Activated B cell treated with CpG ODN at 0.5 μM for 24 hours (primary cell): ENCODE measurements at regions of chr17 and their contacts with region 1.

Region 1: DNA sequence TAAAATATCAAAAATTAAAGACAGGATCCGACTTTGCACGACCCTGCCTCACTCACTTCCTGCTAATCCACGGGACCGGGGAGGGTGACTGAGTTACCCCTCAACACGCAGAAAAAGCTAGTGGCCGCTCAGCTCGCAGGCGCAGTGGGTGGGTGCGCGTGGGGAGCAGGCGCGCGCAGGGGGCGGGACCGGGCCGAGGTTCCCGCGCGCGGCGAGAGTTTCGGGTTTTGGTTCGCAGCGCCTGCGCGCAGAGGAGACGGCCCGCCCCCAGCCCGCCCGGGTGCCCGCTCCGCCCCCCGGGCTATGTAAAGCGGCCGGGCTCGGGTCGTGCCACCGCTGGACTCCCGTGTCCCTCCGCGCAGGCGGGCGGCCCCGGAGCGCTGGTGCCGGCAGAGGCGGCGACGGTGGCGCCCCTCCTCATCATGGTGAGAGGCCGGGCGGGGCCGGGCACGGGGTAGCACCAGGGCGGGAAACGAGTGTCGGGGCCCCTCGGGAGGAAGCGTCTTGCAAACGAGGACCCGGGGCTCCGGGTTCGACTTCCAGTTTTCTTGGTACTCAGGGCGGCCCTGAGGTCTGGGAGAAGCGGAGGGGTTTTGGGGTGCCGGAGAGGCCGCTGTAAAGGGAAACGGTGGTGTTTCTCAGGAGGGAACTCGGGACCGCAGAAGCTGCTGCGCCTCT is at the start of gene CNP:
- DNase-seq: peak; percentile 92
- ATAC-seq: peak; percentile 85
- H3K4me3 Mint-ChIP-seq: peak within 1 kb of the TSS; percentile 82
- H3K27ac Mint-ChIP-seq: peak within 1 kb of the TSS; percentile 72
- H3K4me1 Mint-ChIP-seq: peaks cover 43% of the 10 kb centered on the region
- H3K27me3 Mint-ChIP-seq: no peaks in the 10 kb centered on the region
- CTCF ChIP-seq: no peak
- total RNA-seq, gene CNP: 47.2 and 48.0 TPM in 2 replicates

Region 2: DNA sequence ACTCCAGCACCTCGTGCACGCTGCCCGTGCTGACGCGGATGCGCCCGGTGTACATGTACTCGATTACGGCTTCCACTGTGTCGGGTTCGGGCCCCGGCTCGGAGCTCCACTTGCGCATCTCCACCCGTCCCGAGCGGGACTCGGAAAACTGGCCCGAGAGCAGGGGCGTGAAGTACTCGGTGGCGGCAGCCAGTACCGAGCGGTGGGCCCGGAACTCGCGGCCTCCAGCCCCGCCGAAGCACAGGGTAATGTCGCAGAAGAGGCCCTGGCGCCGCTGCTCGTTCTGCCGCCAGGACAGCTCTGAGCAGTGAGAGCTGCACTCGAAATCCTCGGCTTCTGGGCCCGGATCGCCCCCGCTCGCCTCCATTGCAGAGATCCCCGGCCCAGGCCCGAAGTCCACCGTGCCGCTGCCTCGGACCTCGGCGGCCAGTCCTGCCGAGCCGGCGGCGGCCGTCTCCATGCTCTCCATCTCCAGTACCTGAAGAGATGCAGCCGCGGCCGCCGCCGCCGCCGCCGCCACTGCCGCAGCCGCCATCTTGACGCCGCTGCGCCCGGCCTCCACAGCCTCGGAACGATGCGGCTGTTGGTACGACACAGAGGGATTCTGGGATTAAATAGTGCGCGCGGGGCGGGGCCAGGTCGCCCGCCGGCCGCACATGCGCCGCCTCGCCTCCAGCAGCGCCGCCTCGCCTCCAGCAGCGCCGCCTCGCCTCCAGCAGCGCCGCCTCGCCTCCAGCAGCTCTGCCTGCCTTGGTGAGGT is 101.6 kb before region 1 on chr17 and contains the start of gene KLHL11:
- CTCF ChIA-PET with region 1: no interaction called
- POLR2A ChIA-PET with region 1: interaction called, 6 read pairs
- intact Hi-C with region 1: loop called (anchors 1 kb)
- DNase-seq: peak; percentile 84
- ATAC-seq: peak; percentile 95
- H3K4me3 Mint-ChIP-seq: no peak within 1 kb of the TSS
- H3K27ac Mint-ChIP-seq: peak within 1 kb of the TSS; percentile 87
- H3K4me1 Mint-ChIP-seq: peaks cover 19% of the 10 kb centered on the region
- H3K27me3 Mint-ChIP-seq: no peaks in the 10 kb centered on the region
- CTCF ChIP-seq: no peak
- total RNA-seq, gene KLHL11: 13.6 and 17.3 TPM in 2 replicates

Region 3: DNA sequence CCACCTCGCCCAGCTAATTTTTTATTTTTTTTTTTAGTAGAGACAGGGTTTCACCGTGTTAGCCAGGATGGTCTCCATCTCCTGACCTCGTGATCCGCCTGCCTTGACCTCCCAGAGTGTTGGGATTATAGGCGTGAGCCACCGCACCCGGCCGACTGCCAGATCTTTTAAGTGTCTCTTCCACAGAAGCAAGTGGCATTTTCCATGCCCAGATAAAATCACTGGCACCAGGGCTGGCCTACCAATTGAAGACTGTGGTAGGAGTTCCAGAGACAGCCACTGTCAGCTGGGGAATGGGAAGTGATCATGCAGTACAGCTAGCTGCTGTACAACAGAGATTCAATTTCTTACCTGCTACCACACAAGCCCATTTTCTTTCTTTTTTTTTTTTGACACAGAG is 17.9 kb after region 1 on chr17:
- CTCF ChIA-PET with region 1: interaction called, 3 read pairs
- POLR2A ChIA-PET with region 1: interaction called, 8 read pairs
- intact Hi-C with region 1: loop called (anchors 2 kb)
- DNase-seq: no peak
- ATAC-seq: no peak
- H3K4me3 Mint-ChIP-seq: no peak overlapping the region
- H3K27ac Mint-ChIP-seq: no peak overlapping the region
- H3K4me1 Mint-ChIP-seq: peaks cover 18% of the 10 kb centered on the region
- H3K27me3 Mint-ChIP-seq: no peaks in the 10 kb centered on the region
- CTCF ChIP-seq: no peak

Region 4: DNA sequence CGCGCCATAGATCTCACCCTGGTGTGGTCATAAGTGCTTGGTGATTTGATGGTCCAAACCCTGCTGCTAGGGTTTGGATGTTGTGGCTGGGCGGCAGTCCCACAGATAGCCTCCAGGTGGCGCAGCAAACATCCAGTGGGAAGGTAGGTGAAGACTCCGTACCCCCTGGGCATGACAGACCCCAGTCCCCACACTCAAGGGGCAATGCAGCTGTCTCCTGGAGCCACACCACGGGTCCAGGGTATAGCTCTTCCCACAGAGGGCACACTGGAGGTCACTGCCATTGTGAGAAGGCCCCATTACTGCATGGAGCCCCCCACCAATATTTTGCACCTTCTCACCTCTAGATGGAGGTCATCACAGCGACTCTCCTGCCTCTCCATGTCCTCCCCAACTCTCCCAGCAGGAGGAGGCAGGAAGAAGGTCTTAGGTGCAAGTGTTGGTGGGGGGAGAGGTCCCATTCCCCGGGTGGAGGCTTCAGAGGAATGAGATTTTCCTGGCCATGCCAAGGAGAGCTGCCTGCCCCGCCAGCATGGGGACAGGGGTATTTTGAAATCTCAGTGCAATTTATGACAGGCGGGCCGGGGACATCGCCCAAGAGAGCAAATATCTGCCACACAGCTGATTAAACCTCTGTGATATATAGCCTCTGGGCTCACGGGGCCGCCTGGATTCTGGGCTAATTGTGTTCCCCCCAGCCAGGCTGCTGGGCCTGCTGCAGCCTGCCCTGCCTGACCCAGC is 100.9 kb after region 1 on chr17:
- CTCF ChIA-PET with region 1: interaction called, 5 read pairs
- POLR2A ChIA-PET with region 1: no interaction called
- intact Hi-C with region 1: loop called (anchors 1 kb)
- DNase-seq: peak; percentile 66
- ATAC-seq: peak; percentile 70
- H3K4me3 Mint-ChIP-seq: no peak overlapping the region
- H3K27ac Mint-ChIP-seq: no peak overlapping the region
- H3K4me1 Mint-ChIP-seq: peaks cover 28% of the 10 kb centered on the region
- H3K27me3 Mint-ChIP-seq: peaks cover 8% of the 10 kb centered on the region
- CTCF ChIP-seq: no peak

Region 5: DNA sequence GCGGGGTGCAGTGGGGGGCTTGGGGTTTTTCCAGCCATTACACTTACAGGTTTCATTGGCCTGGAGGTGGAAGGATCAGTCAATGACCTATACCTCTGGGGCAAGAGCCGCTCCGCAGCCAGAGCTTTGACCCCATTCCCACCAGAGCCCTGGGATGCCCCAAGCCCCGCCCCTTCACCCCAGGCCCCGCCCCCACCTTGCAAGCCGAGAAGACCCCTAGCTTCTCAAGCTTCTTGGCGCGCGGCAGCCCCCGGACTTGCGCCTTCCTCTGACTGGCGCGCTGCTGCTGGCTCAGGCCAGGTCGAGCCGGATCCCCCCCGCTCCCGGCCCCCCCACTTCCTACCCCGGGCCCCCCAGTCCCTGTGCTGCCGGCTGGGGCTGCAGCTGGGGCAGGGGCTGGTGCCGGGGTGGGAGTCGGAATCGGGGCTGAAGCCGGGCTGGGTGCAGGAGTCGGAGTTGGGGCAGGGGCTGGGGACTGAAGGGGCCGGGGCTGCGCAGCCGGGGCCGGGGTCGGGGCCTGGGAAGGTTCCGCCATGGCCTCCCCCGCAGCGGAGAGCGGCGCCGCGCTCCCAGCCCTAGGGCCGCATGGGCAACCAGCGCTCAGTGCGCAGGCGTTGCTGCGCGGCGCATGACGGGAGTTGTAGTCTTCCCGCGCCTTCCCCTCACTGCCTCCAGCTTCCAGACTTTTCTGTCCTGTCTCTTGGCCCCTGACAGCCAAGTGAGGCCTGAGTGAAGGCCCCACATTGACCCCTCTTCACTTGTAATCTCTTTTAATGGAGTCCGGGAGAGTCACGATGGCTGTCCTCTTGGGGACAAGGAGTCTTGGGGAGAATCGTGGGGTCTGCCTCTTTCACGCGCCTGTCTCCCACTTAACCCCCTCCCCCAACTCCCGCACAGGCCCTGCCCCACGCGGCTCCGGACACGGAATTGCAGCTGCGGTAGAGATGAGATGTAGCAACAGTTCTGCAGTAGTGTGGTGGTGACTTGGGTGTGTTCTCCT is 154.5 kb after region 1 on chr17 and contains the start of gene KAT2A:
- CTCF ChIA-PET with region 1: interaction called, 110 read pairs
- POLR2A ChIA-PET with region 1: interaction called, 19 read pairs
- intact Hi-C with region 1: loop called (anchors 1 kb)
- DNase-seq: peak; percentile 76
- ATAC-seq: peak; percentile 89
- H3K4me3 Mint-ChIP-seq: peak within 1 kb of the TSS; percentile 71
- H3K27ac Mint-ChIP-seq: peak within 1 kb of the TSS; percentile 30
- H3K4me1 Mint-ChIP-seq: peaks cover 32% of the 10 kb centered on the region
- H3K27me3 Mint-ChIP-seq: no peaks in the 10 kb centered on the region
- CTCF ChIP-seq: no peak
- total RNA-seq, gene KAT2A: 33.4 and 40.1 TPM in 2 replicates

Region 6: DNA sequence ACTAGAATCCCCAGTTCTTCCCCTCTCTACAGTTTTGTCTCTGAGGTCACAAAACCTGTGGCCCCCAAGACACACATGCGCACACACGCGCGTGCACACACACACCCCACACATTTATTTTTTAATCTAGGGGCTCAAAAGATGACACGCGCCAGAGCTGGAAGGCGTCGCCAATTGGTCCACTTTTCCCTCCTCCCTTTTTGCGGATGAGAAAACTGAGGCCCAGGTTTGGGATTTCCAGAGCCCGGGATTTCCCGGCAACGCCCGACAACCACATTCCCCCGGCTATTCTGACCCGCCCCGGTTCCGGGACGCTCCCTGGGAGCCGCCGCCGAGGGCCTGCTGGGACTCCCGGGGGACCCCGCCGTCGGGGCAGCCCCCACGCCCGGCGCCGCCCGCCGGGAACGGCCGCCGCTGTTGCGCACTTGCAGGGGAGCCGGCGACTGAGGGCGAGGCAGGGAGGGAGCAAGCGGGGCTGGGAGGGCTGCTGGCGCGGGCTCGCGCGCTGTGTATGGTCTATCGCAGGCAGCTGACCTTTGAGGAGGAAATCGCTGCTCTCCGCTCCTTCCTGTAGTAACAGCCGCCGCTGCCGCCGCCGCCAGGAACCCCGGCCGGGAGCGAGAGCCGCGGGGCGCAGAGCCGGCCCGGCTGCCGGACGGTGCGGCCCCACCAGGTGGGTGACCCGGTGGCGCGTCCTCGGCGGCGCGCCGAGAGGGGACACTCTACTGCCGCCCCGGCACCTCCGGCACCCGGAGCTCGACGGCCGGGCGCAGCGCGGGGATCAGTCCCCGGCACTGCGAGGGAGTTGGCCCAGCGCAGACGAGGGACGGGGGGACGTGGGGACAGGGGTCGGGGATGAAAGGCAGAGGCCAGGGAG is 321.6 kb after region 1 on chr17 and contains the start of gene STAT5A:
- CTCF ChIA-PET with region 1: no interaction called
- POLR2A ChIA-PET with region 1: no interaction called
- intact Hi-C with region 1: loop called (anchors 5 kb)
- DNase-seq: peak; percentile 70
- ATAC-seq: peak; percentile 77
- H3K4me3 Mint-ChIP-seq: peak within 1 kb of the TSS; percentile 94
- H3K27ac Mint-ChIP-seq: peak within 1 kb of the TSS; percentile 97
- H3K4me1 Mint-ChIP-seq: peaks cover 51% of the 10 kb centered on the region
- H3K27me3 Mint-ChIP-seq: no peaks in the 10 kb centered on the region
- CTCF ChIP-seq: no peak
- total RNA-seq, gene STAT5A: 136 and 140 TPM in 2 replicates